RWPE1 (cell line): ENCODE measurements at regions of chr10 and their contacts with region 1.

Region 1: GRCh38 chr10:77970869-77971803 is 44.6 kb upstream of the DLG5 start:
- DNase-seq: peak; percentile 59
- H3K27ac ChIP-seq: peak overlapping the region; percentile 72
- CTCF ChIP-seq: no peak

Region 2: GRCh38 chr10:77605466-77605865 is 365.7 kb before region 1 on chr10:
- CTCF ChIA-PET with region 1: no interaction called
- POLR2A ChIA-PET with region 1: no interaction called
- DNase-seq: no peak
- H3K27ac ChIP-seq: no peak overlapping the region
- CTCF ChIP-seq: no peak

Region 3: GRCh38 chr10:77943121-77943901 is 27.8 kb before region 1 on chr10:
- CTCF ChIA-PET with region 1: interaction called, 7 read pairs
- POLR2A ChIA-PET with region 1: interaction called, 15 read pairs
- DNase-seq: peak; percentile 88
- H3K27ac ChIP-seq: peak overlapping the region; percentile 95
- CTCF ChIP-seq: no peak

Region 4: GRCh38 chr10:77984986-77985385 is 13.8 kb after region 1 on chr10:
- CTCF ChIA-PET with region 1: no interaction called
- POLR2A ChIA-PET with region 1: no interaction called
- DNase-seq: no peak
- H3K27ac ChIP-seq: no peak overlapping the region
- CTCF ChIP-seq: no peak

Region 5: GRCh38 chr10:78248651-78249464 is 277.7 kb after region 1 on chr10:
- CTCF ChIA-PET with region 1: no interaction called
- POLR2A ChIA-PET with region 1: no interaction called
- DNase-seq: no peak
- H3K27ac ChIP-seq: no peak overlapping the region
- CTCF ChIP-seq: no peak